Activated CD4-positive, alpha-beta memory T cell treated with anti-CD3 and anti-CD28 coated beads for 36 hours (primary cell): ENCODE measurements at regions of chr22 and their contacts with region 1.

Region 1: GRCh38 chr22:37199103-37199759 is 11.2 kb upstream of the C1QTNF6 start:
- DNase-seq: peak; percentile 100
- H3K4me3 Mint-ChIP-seq: peak overlapping the region; percentile 85
- H3K27ac Mint-ChIP-seq: peak overlapping the region; percentile 96
- H3K4me1 Mint-ChIP-seq: peaks cover 44% of the 10 kb centered on the region
- H3K27me3 Mint-ChIP-seq: no peaks in the 10 kb centered on the region

Region 2: DNA sequence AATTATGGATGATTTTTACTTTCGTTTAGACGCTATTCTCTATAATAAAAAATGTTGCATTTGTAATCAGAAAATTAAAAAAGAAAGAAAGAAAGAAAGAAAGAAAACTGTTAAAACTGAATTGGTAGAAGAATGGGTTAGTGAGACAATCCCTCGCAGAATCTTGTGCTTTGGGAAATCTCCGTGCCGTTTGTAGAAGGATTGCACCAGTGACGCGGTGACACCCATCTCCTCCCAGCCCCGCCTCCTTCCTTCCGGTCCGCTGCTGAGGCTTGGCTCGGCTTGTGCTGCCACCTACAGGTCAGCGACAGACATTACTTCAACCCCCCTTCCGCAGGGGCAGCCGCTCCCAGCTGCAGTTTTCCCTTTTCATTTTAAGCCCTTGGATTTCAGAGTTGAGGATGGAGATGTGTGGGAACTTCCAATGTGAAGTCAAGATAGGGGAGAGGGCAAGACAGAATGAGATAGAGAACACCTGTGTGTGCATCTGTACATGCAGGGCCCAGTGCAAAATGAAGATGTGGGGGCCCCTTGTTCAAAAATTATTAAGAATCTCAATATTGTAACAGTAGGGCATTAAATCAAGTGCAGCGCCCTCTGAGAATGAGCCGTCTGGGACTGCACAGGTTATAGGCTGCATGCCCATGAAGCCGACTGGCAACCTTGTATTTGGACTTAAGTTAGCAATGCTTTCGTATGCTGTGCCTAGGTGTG is 221.1 kb before region 1 on chr22:
- CTCF ChIA-PET with region 1: interaction called, 17 read pairs
- POLR2A ChIA-PET with region 1: no interaction called
- intact Hi-C with region 1: no loop called
- DNase-seq: peak; percentile 94
- H3K4me3 Mint-ChIP-seq: peak overlapping the region; percentile 78
- H3K27ac Mint-ChIP-seq: peak overlapping the region; percentile 2
- H3K4me1 Mint-ChIP-seq: peaks cover 5% of the 10 kb centered on the region
- H3K27me3 Mint-ChIP-seq: no peaks in the 10 kb centered on the region

Region 3: DNA sequence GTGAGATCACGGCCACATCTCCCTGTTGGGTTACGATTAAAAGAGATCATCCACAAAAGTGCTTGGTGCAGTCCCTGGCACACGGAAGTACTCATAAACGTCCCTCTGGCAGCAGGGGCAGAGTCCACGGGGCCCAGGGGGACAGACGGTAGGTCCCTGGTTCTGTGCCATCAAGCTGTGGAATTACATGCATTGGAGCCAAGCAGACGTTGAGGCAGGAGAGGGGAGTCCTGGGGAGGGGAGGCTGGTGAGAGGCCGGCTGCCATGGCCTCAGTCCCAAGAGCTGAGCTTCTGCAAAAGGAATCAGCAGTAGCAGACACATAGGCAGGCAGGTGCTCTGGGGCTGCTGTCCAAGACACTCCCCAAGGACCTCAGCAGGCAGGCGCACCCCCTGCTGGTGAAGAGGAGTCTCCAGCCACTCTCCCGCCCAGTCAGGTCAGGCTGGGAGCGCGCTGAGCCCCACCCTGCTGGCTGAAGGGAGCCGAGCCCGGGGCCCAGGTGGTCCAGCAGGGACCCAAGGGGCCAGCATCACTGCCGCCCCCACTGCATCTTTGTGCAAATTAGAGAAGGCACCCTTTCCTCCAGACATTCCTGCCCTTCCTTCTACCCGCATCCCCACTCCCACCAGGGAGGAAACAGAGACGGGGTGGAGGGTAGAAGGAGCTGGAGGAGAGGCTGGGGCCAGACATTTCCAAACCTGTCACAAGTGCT is 155.2 kb before region 1 on chr22:
- CTCF ChIA-PET with region 1: interaction called, 55 read pairs
- POLR2A ChIA-PET with region 1: interaction called, 3 read pairs
- intact Hi-C with region 1: loop called (anchors 1 kb)
- DNase-seq: peak; percentile 75
- H3K4me3 Mint-ChIP-seq: no peak overlapping the region
- H3K27ac Mint-ChIP-seq: no peak overlapping the region
- H3K4me1 Mint-ChIP-seq: peaks cover 25% of the 10 kb centered on the region
- H3K27me3 Mint-ChIP-seq: no peaks in the 10 kb centered on the region

Region 4: DNA sequence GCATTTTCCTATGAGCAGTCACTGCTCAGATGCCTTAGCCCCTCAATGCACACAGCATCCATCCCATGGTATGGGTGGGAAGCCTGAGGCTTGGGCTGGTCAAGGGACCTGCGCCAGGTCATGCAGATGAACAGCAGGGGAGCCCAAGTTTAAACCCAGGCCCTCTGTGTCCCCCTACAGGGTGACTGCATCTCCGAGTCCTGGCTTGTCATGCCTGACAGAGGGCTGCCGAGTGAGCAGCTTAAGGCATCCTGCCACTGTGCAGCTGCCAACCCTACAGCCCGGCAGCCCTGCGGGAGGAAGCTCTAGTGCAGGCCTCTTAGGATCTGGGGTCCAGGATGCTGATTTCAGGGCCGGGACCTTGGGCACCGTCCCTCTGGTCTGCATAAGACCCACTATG is 59.5 kb before region 1 on chr22:
- CTCF ChIA-PET with region 1: interaction called, 13 read pairs
- POLR2A ChIA-PET with region 1: interaction called, 10 read pairs
- intact Hi-C with region 1: loop called (anchors 2 kb)
- DNase-seq: peak; percentile 40
- H3K4me3 Mint-ChIP-seq: peak overlapping the region; percentile 25
- H3K27ac Mint-ChIP-seq: peak overlapping the region; percentile 98
- H3K4me1 Mint-ChIP-seq: peaks cover 78% of the 10 kb centered on the region
- H3K27me3 Mint-ChIP-seq: no peaks in the 10 kb centered on the region

Region 5: GRCh38 chr22:37166675-37167066 is 32.6 kb before region 1 on chr22:
- CTCF ChIA-PET with region 1: interaction called, 38 read pairs
- POLR2A ChIA-PET with region 1: interaction called, 25 read pairs
- intact Hi-C with region 1: loop called (anchors 1 kb)
- DNase-seq: peak; percentile 92
- H3K4me3 Mint-ChIP-seq: peak overlapping the region; percentile 68
- H3K27ac Mint-ChIP-seq: peak overlapping the region; percentile 67
- H3K4me1 Mint-ChIP-seq: peaks cover 79% of the 10 kb centered on the region
- H3K27me3 Mint-ChIP-seq: no peaks in the 10 kb centered on the region

Region 6: GRCh38 chr22:37229805-37230672 is 30.8 kb after region 1 on chr22:
- CTCF ChIA-PET with region 1: interaction called, 20 read pairs
- POLR2A ChIA-PET with region 1: interaction called, 4 read pairs
- intact Hi-C with region 1: no loop called
- DNase-seq: peak; percentile 97
- H3K4me3 Mint-ChIP-seq: peak overlapping the region; percentile 67
- H3K27ac Mint-ChIP-seq: peak overlapping the region; percentile 98
- H3K4me1 Mint-ChIP-seq: peaks cover 90% of the 10 kb centered on the region
- H3K27me3 Mint-ChIP-seq: no peaks in the 10 kb centered on the region